Activated B cell treated with CpG ODN at 0.5 μM for 24 hours (primary cell): ENCODE measurements at regions of chrX and their contacts with region 1.

Region 1: GRCh38 chrX:106894392-106894909 is 8.7 kb downstream of the RIPPLY1 start:
- DNase-seq: no peak
- ATAC-seq: no peak
- H3K4me3 Mint-ChIP-seq: no peak overlapping the region
- H3K27ac Mint-ChIP-seq: no peak overlapping the region
- H3K4me1 Mint-ChIP-seq: no peaks in the 10 kb centered on the region
- H3K27me3 Mint-ChIP-seq: no peaks in the 10 kb centered on the region
- CTCF ChIP-seq: no peak

Region 2: DNA sequence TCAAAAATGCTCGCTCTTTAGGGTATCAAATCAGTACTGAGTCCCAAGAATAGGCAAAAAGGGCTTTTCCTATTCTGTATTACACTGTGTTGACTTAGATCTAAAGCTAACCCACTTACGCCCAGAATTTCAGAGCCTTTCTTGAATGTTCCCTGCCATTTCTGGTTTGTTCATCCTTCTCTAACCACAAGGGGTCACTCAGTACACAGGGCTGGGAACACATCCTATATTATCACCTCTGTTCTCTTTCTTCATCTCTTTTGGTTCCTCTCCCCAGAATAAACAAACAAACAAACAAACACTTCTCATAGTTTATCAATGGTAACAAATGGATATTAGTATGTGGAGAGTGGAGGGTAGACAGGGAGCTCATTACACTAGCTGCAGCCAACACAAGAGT is 131.1 kb after region 1 on chrX:
- CTCF ChIA-PET with region 1: no interaction called
- POLR2A ChIA-PET with region 1: no interaction called
- intact Hi-C with region 1: loop called (anchors 10 kb)
- DNase-seq: no peak
- ATAC-seq: no peak
- H3K4me3 Mint-ChIP-seq: no peak overlapping the region
- H3K27ac Mint-ChIP-seq: no peak overlapping the region
- H3K4me1 Mint-ChIP-seq: no peaks in the 10 kb centered on the region
- H3K27me3 Mint-ChIP-seq: peaks cover 1% of the 10 kb centered on the region
- CTCF ChIP-seq: no peak

Region 3: GRCh38 chrX:107429090-107429489 is 534.6 kb after region 1 on chrX:
- CTCF ChIA-PET with region 1: interaction called, 3 read pairs
- POLR2A ChIA-PET with region 1: no interaction called
- intact Hi-C with region 1: loop called (anchors 1 kb)
- DNase-seq: no peak
- ATAC-seq: no peak
- H3K4me3 Mint-ChIP-seq: no peak overlapping the region
- H3K27ac Mint-ChIP-seq: no peak overlapping the region
- H3K4me1 Mint-ChIP-seq: no peaks in the 10 kb centered on the region
- H3K27me3 Mint-ChIP-seq: peaks cover 2% of the 10 kb centered on the region
- CTCF ChIP-seq: no peak

Region 4: DNA sequence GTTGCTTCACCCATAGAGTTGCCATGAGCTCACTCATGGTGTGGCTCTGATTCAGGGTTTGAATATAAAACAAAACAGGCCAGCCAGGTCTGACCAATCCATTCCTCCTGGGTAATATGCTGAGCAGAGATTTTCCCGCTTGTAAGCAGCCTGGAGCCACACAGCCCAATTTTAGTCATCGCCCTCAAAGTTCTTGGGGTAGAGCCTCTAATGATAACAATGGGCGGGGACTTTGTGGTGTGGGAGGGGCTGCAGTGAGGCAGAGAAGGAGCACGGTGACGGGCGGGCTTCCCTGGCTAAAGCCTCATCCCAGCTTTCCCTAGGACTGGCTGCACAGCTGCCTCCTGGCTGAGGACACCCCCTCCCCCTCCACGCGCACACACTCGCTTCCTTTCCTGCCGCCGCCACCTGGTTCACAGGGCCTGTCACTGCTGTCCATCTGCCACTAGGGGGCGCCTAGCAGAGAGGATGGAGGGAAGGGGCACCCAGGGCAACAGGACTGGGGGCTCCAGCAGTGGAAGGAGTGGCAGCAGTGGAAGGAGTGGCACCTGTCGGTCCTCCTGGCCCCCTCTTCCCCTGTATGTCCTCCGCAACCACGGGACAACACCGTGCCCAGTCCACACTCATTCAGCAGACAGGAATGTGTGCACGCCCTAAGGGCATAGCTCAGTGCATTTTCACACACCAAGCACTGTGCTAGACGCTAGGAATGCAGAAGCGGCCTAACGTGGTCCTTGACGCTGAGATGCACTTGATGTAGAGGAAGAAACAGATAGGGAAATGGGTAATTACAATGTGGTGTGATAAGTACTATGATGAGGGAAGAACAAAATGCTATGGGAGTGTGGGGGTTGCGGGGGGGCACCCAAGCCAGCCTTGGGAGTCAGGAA is 760.7 kb after region 1 on chrX:
- CTCF ChIA-PET with region 1: no interaction called
- POLR2A ChIA-PET with region 1: no interaction called
- intact Hi-C with region 1: loop called (anchors 5 kb)
- DNase-seq: peak; percentile 40
- ATAC-seq: peak; percentile 86
- H3K4me3 Mint-ChIP-seq: no peak overlapping the region
- H3K27ac Mint-ChIP-seq: no peak overlapping the region
- H3K4me1 Mint-ChIP-seq: peaks cover 10% of the 10 kb centered on the region
- H3K27me3 Mint-ChIP-seq: no peaks in the 10 kb centered on the region
- CTCF ChIP-seq: no peak

Region 5: GRCh38 chrX:108001174-108001814 is 1106.8 kb after region 1 on chrX:
- CTCF ChIA-PET with region 1: no interaction called
- POLR2A ChIA-PET with region 1: no interaction called
- intact Hi-C with region 1: loop called (anchors 2 kb)
- DNase-seq: no peak
- ATAC-seq: no peak
- H3K4me3 Mint-ChIP-seq: no peak overlapping the region
- H3K27ac Mint-ChIP-seq: no peak overlapping the region
- H3K4me1 Mint-ChIP-seq: no peaks in the 10 kb centered on the region
- H3K27me3 Mint-ChIP-seq: peaks cover 17% of the 10 kb centered on the region
- CTCF ChIP-seq: no peak

Region 6: GRCh38 chrX:108070891-108071290 is 1176.4 kb after region 1 on chrX:
- CTCF ChIA-PET with region 1: interaction called, 3 read pairs
- POLR2A ChIA-PET with region 1: no interaction called
- intact Hi-C with region 1: loop called (anchors 1 kb)
- DNase-seq: no peak
- ATAC-seq: no peak
- H3K4me3 Mint-ChIP-seq: no peak overlapping the region
- H3K27ac Mint-ChIP-seq: no peak overlapping the region
- H3K4me1 Mint-ChIP-seq: peaks cover 3% of the 10 kb centered on the region
- H3K27me3 Mint-ChIP-seq: no peaks in the 10 kb centered on the region
- CTCF ChIP-seq: no peak